ENCODE measurements at regions of chr5 and their contacts with region 1.

Region 1: GRCh38 chr5:148998174-148998797 is 64.6 kb downstream of the SH3TC2 start:
- DNase-seq: peak; percentile 75
- ATAC-seq: peak; percentile 30; the same call in 1 of the 2 replicates
- H3K4me3 ChIP-seq: no peak overlapping the region
- H3K27ac ChIP-seq: no peak overlapping the region
- H3K4me1 ChIP-seq: peaks cover 11% of the 10 kb centered on the region
- H3K27me3 ChIP-seq: no peaks in the 10 kb centered on the region
- CTCF ChIP-seq: peak; percentile 73
- POLR2A ChIP-seq: no peak
- RAD21 ChIP-seq: peak; percentile 82

Region 2: DNA sequence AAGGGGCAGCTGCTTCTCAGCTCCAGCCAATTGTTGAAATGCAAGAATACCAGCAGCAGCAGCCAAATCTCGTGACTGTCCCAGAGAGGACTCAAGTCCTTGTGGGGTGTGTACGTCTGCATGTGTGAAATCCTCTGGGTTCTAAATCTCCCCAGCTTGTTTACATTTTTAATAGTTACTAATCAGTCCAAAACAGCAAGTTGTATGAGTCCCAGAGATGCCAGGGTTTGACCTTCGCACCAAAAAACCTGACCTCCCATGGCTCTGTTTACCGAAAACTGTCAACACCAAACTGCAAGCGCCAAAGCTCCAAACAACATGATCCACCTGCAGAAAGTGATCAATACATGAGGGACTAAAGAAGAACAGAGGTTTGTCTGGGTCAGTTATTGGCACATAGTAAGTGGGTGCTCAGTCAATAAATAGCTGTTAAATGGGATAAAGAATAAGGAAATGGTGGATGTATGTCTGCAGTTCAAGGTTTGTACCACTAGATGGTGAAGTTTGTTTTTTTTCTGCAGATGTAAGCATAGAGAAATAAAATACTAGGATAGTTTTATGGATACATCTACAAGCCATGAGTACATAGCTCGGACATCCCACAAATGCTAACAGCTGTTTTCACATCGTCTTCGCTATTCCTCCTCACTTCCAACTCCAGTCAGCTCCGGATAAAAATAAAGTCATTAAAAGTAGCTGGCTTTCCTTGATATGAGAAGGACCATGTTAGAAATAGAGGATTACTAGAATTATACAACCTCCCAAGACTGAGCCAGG is 257.1 kb before region 1 on chr5:
- CTCF ChIA-PET with region 1: interaction called, 9 read pairs
- POLR2A ChIA-PET with region 1: no interaction called
- dilution Hi-C with region 1: no loop called
- in situ Hi-C with region 1: no loop called
- intact Hi-C with region 1: loop called (anchors 1 kb)
- DNase-seq: peak; percentile 85
- ATAC-seq: peak; percentile 95
- H3K4me3 ChIP-seq: no peak overlapping the region
- H3K27ac ChIP-seq: no peak overlapping the region
- H3K4me1 ChIP-seq: no peaks in the 10 kb centered on the region
- H3K27me3 ChIP-seq: no peaks in the 10 kb centered on the region
- CTCF ChIP-seq: peak; percentile 85
- POLR2A ChIP-seq: no peak
- RAD21 ChIP-seq: peak; percentile 77

Region 3: GRCh38 chr5:148820461-148821395 is 177.6 kb before region 1 on chr5:
- CTCF ChIA-PET with region 1: interaction called, 6 read pairs
- POLR2A ChIA-PET with region 1: interaction called, 3 read pairs
- dilution Hi-C with region 1: no loop called
- in situ Hi-C with region 1: loop called (anchors 10 kb)
- intact Hi-C with region 1: loop called (anchors 1 kb)
- DNase-seq: peak; percentile 50
- ATAC-seq: peak; percentile 77
- H3K4me3 ChIP-seq: no peak overlapping the region
- H3K27ac ChIP-seq: no peak overlapping the region
- H3K4me1 ChIP-seq: 0 out of 2 replicates have a peak, but pooled peaks cover 2% of the 10 kb centered on the region
- H3K27me3 ChIP-seq: no peaks in the 10 kb centered on the region; the same call in 1 of the 2 replicates
- CTCF ChIP-seq: peak; percentile 59
- POLR2A ChIP-seq: no peak
- RAD21 ChIP-seq: peak; percentile 57

Region 4: GRCh38 chr5:148826053-148826738 is 172.1 kb before region 1 on chr5 and contains the start of gene ADRB2:
- CTCF ChIA-PET with region 1: interaction called, 6 read pairs
- POLR2A ChIA-PET with region 1: interaction called, 3 read pairs
- dilution Hi-C with region 1: no loop called
- in situ Hi-C with region 1: loop called (anchors 10 kb)
- intact Hi-C with region 1: no loop called
- DNase-seq: peak; percentile 91
- ATAC-seq: peak; percentile 98
- H3K4me3 ChIP-seq: peak within 1 kb of the TSS; percentile 67
- H3K27ac ChIP-seq: peak within 1 kb of the TSS; percentile 70
- H3K4me1 ChIP-seq: peaks cover 13% of the 10 kb centered on the region
- H3K27me3 ChIP-seq: no peaks in the 10 kb centered on the region
- CTCF ChIP-seq: no peak
- POLR2A ChIP-seq: peak; percentile 94
- RAD21 ChIP-seq: no peak
- total RNA-seq, gene ADRB2: 3.4 and 4.4 TPM in 2 replicates

Region 5: DNA sequence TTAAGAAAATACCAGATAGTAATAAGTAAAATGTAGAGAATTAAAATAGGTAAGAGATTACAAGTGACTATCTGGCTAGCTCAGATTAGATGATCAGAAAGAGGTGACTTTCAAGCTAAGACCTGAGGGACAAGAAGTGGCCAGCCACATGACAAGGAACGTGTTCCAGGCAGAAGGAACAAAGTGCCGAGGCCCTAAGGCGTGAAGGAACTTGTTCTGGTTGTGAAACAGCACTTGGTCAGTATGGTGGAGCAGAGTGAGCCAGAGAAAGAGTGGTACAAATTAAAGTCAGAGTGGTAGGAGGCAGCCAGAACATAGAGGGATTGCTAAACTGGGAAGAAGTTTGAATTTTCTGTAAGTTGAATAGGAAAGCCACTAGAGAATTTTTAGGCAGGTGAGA is 98.3 kb before region 1 on chr5:
- CTCF ChIA-PET with region 1: no interaction called
- POLR2A ChIA-PET with region 1: no interaction called
- dilution Hi-C with region 1: no loop called
- in situ Hi-C with region 1: no loop called
- intact Hi-C with region 1: no loop called
- DNase-seq: no peak
- ATAC-seq: no peak
- H3K4me3 ChIP-seq: no peak overlapping the region
- H3K27ac ChIP-seq: no peak overlapping the region
- H3K4me1 ChIP-seq: no peaks in the 10 kb centered on the region
- H3K27me3 ChIP-seq: no peaks in the 10 kb centered on the region
- CTCF ChIP-seq: no peak
- POLR2A ChIP-seq: no peak
- RAD21 ChIP-seq: no peak

Region 6: DNA sequence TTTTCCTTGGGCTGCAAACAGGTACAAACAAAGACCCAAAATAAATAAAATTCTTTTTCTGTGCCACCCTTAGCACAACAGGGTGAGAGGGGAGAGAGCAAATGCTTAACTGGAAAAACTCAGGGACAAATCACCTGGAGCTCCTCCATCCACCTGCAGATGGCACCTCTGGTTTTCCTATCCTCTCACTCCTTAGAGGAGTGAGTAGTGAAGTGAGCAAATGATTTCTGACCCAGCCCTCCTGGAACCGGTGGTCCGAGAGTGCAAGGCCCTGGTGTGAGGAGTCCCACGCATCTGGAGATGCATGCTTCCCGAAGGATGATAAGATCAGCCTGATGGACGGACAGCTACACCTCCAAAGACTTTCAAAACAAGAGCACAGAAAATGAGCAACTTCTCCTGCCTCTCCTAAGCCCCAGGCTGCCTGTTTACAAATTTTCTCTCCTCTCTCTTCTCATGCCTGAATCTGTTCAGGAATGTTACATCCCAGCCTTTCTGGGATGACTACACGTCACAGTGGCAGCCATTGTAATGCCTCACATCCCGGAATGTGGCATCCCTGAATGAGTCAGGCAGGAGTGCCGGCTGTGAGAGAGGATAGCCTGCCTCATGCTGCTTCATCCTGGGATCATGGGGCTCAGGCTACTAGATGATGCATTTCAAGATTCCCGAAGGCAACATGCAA is 85.4 kb before region 1 on chr5:
- CTCF ChIA-PET with region 1: no interaction called
- POLR2A ChIA-PET with region 1: no interaction called
- dilution Hi-C with region 1: no loop called
- in situ Hi-C with region 1: no loop called
- intact Hi-C with region 1: loop called (anchors 1 kb)
- DNase-seq: peak; percentile 99
- ATAC-seq: peak; percentile 80
- H3K4me3 ChIP-seq: no peak overlapping the region
- H3K27ac ChIP-seq: peak overlapping the region; percentile 86
- H3K4me1 ChIP-seq: peaks cover 47% of the 10 kb centered on the region
- H3K27me3 ChIP-seq: no peaks in the 10 kb centered on the region
- CTCF ChIP-seq: peak; percentile 35
- POLR2A ChIP-seq: peak; percentile 15; the same call in 1 of the 2 replicates
- RAD21 ChIP-seq: peak; percentile 37

Region 7: GRCh38 chr5:148957591-148958202 is 40.6 kb before region 1 on chr5:
- CTCF ChIA-PET with region 1: interaction called, 5 read pairs
- POLR2A ChIA-PET with region 1: no interaction called
- dilution Hi-C with region 1: no loop called
- in situ Hi-C with region 1: no loop called
- intact Hi-C with region 1: loop called (anchors 2 kb)
- DNase-seq: peak; percentile 43
- ATAC-seq: peak; percentile 73
- H3K4me3 ChIP-seq: no peak overlapping the region
- H3K27ac ChIP-seq: no peak overlapping the region
- H3K4me1 ChIP-seq: no peaks in the 10 kb centered on the region
- H3K27me3 ChIP-seq: no peaks in the 10 kb centered on the region
- CTCF ChIP-seq: peak; percentile 83
- POLR2A ChIP-seq: no peak
- RAD21 ChIP-seq: peak; percentile 86

Measured in IMR-90 (cell line).